ENCODE measurements at regions of chr4 and their contacts with region 1.

Region 1: GRCh38 chr4:95198961-95199360 is 349.8 kb downstream of the UNC5C start:
- DNase-seq: no peak
- ATAC-seq: no peak
- H3K4me3 ChIP-seq: no peak overlapping the region
- H3K27ac ChIP-seq: no peak overlapping the region
- H3K4me1 ChIP-seq: peaks cover 0 to 4% (median 0%) of the 10 kb centered on the region in 9 donors
- H3K27me3 ChIP-seq: peaks cover 0 to 4% (median 0%) of the 10 kb centered on the region in 7 donors
- CTCF ChIP-seq: no peak

Region 2: DNA sequence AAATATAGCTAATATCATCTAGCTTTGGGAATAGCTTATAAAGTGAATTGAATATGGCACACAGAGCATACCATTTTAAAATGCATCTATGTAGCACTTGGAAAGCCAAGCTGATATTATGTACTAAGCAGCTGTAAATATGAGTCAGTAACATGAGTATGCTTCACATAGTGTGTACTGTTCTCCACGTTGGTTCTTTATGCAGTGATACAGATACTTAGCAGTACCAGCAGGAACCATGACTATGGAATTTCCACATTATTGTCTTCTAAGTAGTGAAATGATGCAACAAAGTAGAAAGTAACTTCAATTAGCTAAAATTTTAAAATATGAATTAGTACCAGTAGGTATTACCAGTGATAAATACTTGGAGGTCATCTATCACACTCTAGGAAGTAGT is 121.1 kb before region 1 on chr4:
- intact Hi-C with region 1: no loop called
- DNase-seq: no peak
- ATAC-seq: no peak
- H3K4me3 ChIP-seq: no peak overlapping the region
- H3K27ac ChIP-seq: no peak overlapping the region
- H3K4me1 ChIP-seq: no peaks in the 10 kb centered on the region
- H3K27me3 ChIP-seq: no peaks in the 10 kb centered on the region
- CTCF ChIP-seq: no peak

Region 3: DNA sequence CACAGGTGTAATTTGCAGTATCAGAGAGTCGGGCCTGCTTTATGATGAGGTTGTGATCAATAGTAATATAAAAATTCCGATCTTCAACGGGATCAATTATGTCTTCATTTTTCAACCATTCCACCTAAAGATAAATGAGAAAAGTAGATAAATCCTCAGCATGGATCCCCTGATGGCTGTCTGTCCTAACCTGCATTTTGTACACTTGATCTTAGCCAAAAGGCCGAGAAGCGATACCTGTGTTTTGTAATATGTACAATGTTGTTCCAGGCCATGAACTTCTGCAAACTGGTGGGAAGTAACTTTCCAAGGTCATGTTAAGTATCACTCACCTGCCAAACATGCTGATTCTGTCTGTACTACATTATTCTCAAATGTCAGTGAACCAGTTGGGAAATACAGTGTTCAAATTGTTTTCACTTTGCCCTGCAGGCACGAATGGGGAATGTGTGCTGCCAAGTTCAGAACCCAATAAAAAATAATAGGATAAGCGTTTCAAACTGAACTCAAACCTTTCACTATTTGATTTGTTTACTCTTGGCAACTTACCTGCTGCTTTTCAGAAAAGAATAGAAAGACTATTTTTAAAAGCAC is 51.7 kb after region 1 on chr4:
- intact Hi-C with region 1: loop called in 1 of 10 experiments (anchors 1 kb)
- DNase-seq: no peak
- ATAC-seq: no peak
- H3K4me3 ChIP-seq: no peak overlapping the region
- H3K27ac ChIP-seq: no peak overlapping the region
- H3K4me1 ChIP-seq: no peaks in the 10 kb centered on the region
- H3K27me3 ChIP-seq: no peaks in the 10 kb centered on the region
- CTCF ChIP-seq: no peak

Measured in heart right ventricle (tissue), 16 donors.